ENCODE measurements at regions of chr13 and their contacts with region 1.

Region 1: DNA sequence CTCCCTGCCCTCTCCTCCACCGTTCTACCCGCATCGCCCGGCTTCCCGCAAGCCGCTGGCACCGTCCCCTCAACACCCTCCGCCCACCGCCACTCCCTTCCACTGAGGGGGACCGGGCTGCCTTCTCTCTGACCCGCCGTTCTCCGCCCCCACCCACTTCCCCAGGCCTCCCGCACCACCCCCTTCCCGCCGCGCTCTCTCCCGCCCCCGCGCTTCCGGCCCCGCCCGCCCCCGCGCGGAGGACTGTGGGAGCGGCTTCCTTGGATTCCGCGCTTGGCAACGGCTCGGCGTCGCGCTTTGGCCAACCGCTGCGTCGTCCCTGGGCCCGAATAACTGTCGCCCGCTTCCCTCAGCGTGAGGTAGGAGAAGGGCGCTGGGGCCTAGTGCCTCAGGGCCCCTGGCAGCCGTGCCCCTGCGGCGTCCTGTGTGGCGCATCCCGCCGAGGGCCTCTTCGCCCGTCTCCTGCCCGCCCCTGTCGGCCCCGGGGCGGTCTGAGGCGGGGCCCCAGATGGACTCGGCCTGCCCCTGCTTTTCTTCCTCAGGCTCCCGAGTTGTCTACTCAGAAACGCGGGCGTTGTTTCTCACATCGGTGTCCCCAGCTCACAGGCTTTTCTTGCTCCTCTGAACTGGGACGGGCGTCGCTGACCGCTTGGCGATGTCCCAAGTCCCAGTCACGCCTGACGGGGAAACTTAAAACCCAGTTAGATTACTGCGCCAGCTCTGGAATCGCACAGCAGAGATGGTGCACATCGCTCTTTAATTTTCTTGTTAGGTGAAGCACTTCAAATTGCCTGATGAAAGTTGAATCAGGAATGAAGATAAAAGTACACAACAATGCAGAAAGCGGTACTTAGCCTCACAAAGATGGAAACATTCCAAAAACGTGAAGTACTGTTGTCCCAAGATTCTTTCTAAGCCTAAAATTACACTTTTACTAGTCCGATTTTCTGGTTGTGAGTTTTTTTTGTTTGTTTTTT is at the start of gene IFT88:
- DNase-seq: peak; percentile 92 to 95 (median 93)
- ATAC-seq: peak; percentile 92 to 99 (median 98)
- H3K4me3 ChIP-seq: peak within 1 kb of the TSS; percentile 34 to 89 (median 76)
- H3K27ac ChIP-seq: peak within 1 kb of the TSS; percentile 81 to 98 (median 95)
- H3K4me1 ChIP-seq: peaks cover 0 to 24% (median 9%) of the 10 kb centered on the region in 12 donors
- H3K27me3 ChIP-seq: no peaks in the 10 kb centered on the region
- CTCF ChIP-seq: peak in 1 of 12 donors; percentile 10
- POLR2A ChIP-seq: no peak
- total RNA-seq, gene IFT88: 6.9 to 11.4 (median 8.5) TPM

Region 2: DNA sequence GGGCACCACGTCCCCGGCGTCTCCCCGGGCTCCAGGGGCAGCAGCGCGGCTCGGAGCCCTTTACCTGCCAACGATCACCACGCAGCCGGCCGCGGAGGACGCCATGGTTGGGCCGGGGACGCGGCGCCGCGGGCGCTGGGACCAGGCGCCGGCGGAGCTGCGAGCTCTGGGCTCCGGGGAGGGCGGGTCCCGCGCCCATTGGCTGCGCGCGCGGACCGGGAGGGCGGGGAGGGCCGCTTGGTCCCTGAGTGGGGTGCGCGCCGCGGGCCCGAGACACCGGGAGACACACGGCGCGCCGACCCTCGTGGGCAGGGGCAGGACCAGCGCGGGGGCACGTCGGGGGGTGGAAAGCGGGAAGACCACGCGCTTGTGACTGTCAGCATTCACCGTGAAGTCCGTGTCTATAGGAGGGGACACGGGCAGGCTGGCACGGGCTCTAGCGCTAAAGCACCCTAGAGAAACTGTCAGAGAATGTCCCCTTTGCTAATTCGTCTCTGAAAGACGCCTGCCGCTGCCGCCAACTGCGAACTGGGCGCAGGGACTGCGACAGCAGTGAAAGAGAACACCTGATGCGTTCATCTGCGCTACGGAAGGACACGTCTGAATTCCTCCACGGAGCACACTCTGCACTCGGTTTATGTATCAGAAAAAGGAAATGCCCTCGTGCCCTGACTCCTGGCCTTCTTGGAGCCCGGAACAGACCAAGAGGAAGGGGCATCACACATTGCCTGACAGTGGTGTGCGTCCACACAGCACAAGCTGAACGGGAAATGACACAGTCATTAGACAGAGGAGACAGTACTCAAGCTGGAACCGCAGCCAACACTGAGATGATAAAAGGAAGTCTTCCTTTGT is 41.3 kb before region 1 on chr13 and contains the start of gene CRYL1:
- intact Hi-C with region 1: loop called in 8 of 10 experiments (anchors 1 to 5 kb)
- DNase-seq: peak; percentile 83 to 91 (median 86)
- ATAC-seq: peak; percentile 93 to 99 (median 97)
- H3K4me3 ChIP-seq: peak within 1 kb of the TSS; percentile 73 to 99 (median 88)
- H3K27ac ChIP-seq: peak within 1 kb of the TSS; percentile 62 to 98 (median 90)
- H3K4me1 ChIP-seq: peaks cover 0 to 38% (median 13%) of the 10 kb centered on the region in 12 donors
- H3K27me3 ChIP-seq: peaks cover 0 to 1% (median 0%) of the 10 kb centered on the region in 9 donors
- CTCF ChIP-seq: no peak
- POLR2A ChIP-seq: peak in 1 of 2 donors; percentile 80
- total RNA-seq, gene CRYL1: 14.9 to 36.5 (median 22.3) TPM

Region 3: GRCh38 chr13:20703780-20704445 is 136.7 kb after region 1 on chr13:
- intact Hi-C with region 1: loop called in 1 of 10 experiments (anchors 5 kb)
- DNase-seq: peak; percentile 67 to 87 (median 79)
- ATAC-seq: peak; percentile 71 to 91 (median 85)
- H3K4me3 ChIP-seq: peak overlapping the region in 11 of 12 donors; percentile 16 to 74 (median 58)
- H3K27ac ChIP-seq: peak overlapping the region in 2 of 12 donors; percentile 34 to 63
- H3K4me1 ChIP-seq: peaks cover 0 to 17% (median 5%) of the 10 kb centered on the region in 12 donors
- H3K27me3 ChIP-seq: peaks cover 0 to 25% (median 0%) of the 10 kb centered on the region in 9 donors
- CTCF ChIP-seq: peak; percentile 7 to 66 (median 42)
- POLR2A ChIP-seq: no peak

Region 4: GRCh38 chr13:20902438-20903163 is 335.4 kb after region 1 on chr13 and contains the start of gene XPO4:
- intact Hi-C with region 1: loop called in 1 of 10 experiments (anchors 2 kb)
- DNase-seq: peak; percentile 81 to 91 (median 84)
- ATAC-seq: peak; percentile 83 to 98 (median 97)
- H3K4me3 ChIP-seq: peak within 1 kb of the TSS; percentile 72 to 99 (median 92)
- H3K27ac ChIP-seq: peak within 1 kb of the TSS; percentile 86 to 97 (median 92)
- H3K4me1 ChIP-seq: peaks cover 0 to 24% (median 15%) of the 10 kb centered on the region in 12 donors
- H3K27me3 ChIP-seq: no peaks in the 10 kb centered on the region
- CTCF ChIP-seq: no peak
- POLR2A ChIP-seq: peak in 1 of 2 donors; percentile 52
- total RNA-seq, gene XPO4: 18.5 to 53.7 (median 28.4) TPM